IMR-90 (cell line): ENCODE measurements at regions of chr6 and their contacts with region 1.

Region 1: GRCh38 chr6:2448820-2449571 is 203.6 kb upstream of the GMDS start:
- DNase-seq: peak; percentile 89
- ATAC-seq: peak; percentile 95
- H3K4me3 ChIP-seq: peak overlapping the region; percentile 50
- H3K27ac ChIP-seq: no peak overlapping the region
- H3K4me1 ChIP-seq: peaks cover 4% of the 10 kb centered on the region; the same call in 1 of the 2 replicates
- H3K27me3 ChIP-seq: no peaks in the 10 kb centered on the region; the same call in 1 of the 2 replicates
- CTCF ChIP-seq: peak; percentile 89
- POLR2A ChIP-seq: no peak
- RAD21 ChIP-seq: peak; percentile 95

Region 2: GRCh38 chr6:1604158-1605030 is 844.6 kb before region 1 on chr6:
- CTCF ChIA-PET with region 1: interaction called, 3 read pairs
- POLR2A ChIA-PET with region 1: no interaction called
- dilution Hi-C with region 1: no loop called
- in situ Hi-C with region 1: no loop called
- intact Hi-C with region 1: loop called (anchors 2 kb)
- DNase-seq: peak; percentile 36
- ATAC-seq: peak; percentile 93
- H3K4me3 ChIP-seq: peak overlapping the region; percentile 45
- H3K27ac ChIP-seq: no peak overlapping the region
- H3K4me1 ChIP-seq: peaks cover 2% of the 10 kb centered on the region; the same call in 1 of the 2 replicates
- H3K27me3 ChIP-seq: peaks cover 29% of the 10 kb centered on the region
- CTCF ChIP-seq: peak; percentile 95
- POLR2A ChIP-seq: no peak
- RAD21 ChIP-seq: peak; percentile 97

Region 3: DNA sequence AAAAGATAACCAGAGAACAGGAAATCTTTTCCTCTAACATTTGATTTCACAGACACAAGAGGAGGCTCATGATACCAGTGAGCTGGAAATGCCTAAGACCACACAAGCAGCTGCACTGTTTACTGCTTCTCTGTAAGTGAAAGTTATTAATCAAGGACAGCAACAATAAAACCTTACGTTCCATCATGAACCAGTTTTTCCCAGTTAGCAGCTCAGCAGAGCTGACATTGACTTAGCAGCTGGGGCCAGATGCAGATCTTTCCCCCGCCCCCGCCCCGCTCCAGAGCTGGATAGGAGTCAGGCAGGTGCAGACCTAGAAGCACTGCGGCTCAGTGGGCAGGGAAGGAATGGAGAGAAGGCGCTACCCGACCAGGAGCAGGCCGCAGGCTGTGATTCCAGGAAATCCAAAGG is 478.8 kb before region 1 on chr6:
- CTCF ChIA-PET with region 1: no interaction called
- POLR2A ChIA-PET with region 1: no interaction called
- dilution Hi-C with region 1: no loop called
- in situ Hi-C with region 1: no loop called
- intact Hi-C with region 1: loop called (anchors 10 kb)
- DNase-seq: peak; percentile 44
- ATAC-seq: peak; percentile 40; the same call in 1 of the 2 replicates
- H3K4me3 ChIP-seq: no peak overlapping the region
- H3K27ac ChIP-seq: no peak overlapping the region
- H3K4me1 ChIP-seq: peaks cover 5% of the 10 kb centered on the region; the same call in 1 of the 2 replicates
- H3K27me3 ChIP-seq: no peaks in the 10 kb centered on the region
- CTCF ChIP-seq: no peak
- POLR2A ChIP-seq: no peak
- RAD21 ChIP-seq: no peak

Region 4: GRCh38 chr6:2103644-2104523 is 345.1 kb before region 1 on chr6:
- CTCF ChIA-PET with region 1: interaction called, 3 read pairs
- POLR2A ChIA-PET with region 1: no interaction called
- dilution Hi-C with region 1: no loop called
- in situ Hi-C with region 1: no loop called
- intact Hi-C with region 1: loop called (anchors 2 kb)
- DNase-seq: peak; percentile 69
- ATAC-seq: peak; percentile 82
- H3K4me3 ChIP-seq: no peak overlapping the region
- H3K27ac ChIP-seq: no peak overlapping the region
- H3K4me1 ChIP-seq: peaks cover 3% of the 10 kb centered on the region
- H3K27me3 ChIP-seq: no peaks in the 10 kb centered on the region
- CTCF ChIP-seq: peak; percentile 81
- POLR2A ChIP-seq: 0 out of 2 replicates have a peak, but pooled peaks have one; percentile 29
- RAD21 ChIP-seq: peak; percentile 92

Region 5: DNA sequence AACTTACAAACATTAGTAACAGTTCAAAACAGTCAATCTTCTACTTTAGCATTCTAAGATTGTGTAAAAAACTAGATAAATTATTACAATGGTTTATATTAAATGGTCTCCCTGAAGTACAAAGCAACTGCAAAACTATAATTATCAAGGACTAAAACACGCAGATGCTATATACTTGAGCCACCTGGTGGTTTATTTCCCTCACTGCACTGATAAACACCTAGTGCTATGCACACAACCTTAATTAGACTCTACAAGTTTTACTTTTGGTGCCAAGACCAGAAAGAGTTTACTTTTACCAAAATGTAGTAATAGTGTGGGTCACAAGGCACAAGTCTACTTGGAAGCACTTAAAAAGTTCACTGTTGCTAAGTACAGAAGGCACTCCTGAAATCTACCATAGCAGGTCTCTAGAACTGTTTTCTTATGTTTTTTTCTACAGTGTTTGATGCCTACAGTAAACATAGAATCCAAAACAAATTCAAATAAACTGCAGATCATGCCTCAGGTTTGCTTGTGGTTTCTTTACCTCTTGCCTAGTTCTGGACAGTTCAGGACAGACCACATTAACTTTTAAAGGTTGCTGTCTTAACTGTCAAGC is 252.8 kb before region 1 on chr6:
- CTCF ChIA-PET with region 1: interaction called, 3 read pairs
- POLR2A ChIA-PET with region 1: no interaction called
- dilution Hi-C with region 1: no loop called
- in situ Hi-C with region 1: no loop called
- intact Hi-C with region 1: loop called (anchors 2 kb)
- DNase-seq: peak; percentile 61
- ATAC-seq: peak; percentile 84
- H3K4me3 ChIP-seq: no peak overlapping the region
- H3K27ac ChIP-seq: no peak overlapping the region
- H3K4me1 ChIP-seq: peaks cover 8% of the 10 kb centered on the region; the same call in 1 of the 2 replicates
- H3K27me3 ChIP-seq: no peaks in the 10 kb centered on the region
- CTCF ChIP-seq: peak; percentile 72
- POLR2A ChIP-seq: no peak
- RAD21 ChIP-seq: peak; percentile 81

Region 6: GRCh38 chr6:2314641-2315040 is 134.4 kb before region 1 on chr6:
- CTCF ChIA-PET with region 1: no interaction called
- POLR2A ChIA-PET with region 1: no interaction called
- dilution Hi-C with region 1: no loop called
- in situ Hi-C with region 1: no loop called
- intact Hi-C with region 1: no loop called
- DNase-seq: no peak
- ATAC-seq: no peak
- H3K4me3 ChIP-seq: no peak overlapping the region
- H3K27ac ChIP-seq: no peak overlapping the region
- H3K4me1 ChIP-seq: no peaks in the 10 kb centered on the region
- H3K27me3 ChIP-seq: no peaks in the 10 kb centered on the region
- CTCF ChIP-seq: no peak
- POLR2A ChIP-seq: no peak
- RAD21 ChIP-seq: no peak

Region 7: GRCh38 chr6:2634139-2634964 is 185.4 kb after region 1 on chr6:
- CTCF ChIA-PET with region 1: interaction called, 5 read pairs
- POLR2A ChIA-PET with region 1: no interaction called
- dilution Hi-C with region 1: no loop called
- in situ Hi-C with region 1: no loop called
- intact Hi-C with region 1: loop called (anchors 1 kb)
- DNase-seq: peak; percentile 81
- ATAC-seq: peak; percentile 88
- H3K4me3 ChIP-seq: peak overlapping the region; percentile 17; the same call in 1 of the 2 replicates
- H3K27ac ChIP-seq: peak overlapping the region; percentile 24
- H3K4me1 ChIP-seq: peaks cover 19% of the 10 kb centered on the region
- H3K27me3 ChIP-seq: peaks cover under 1% of the 10 kb centered on the region
- CTCF ChIP-seq: peak; percentile 97
- POLR2A ChIP-seq: 0 out of 2 replicates have a peak, but pooled peaks have one; percentile 33
- RAD21 ChIP-seq: peak; percentile 94

Region 8: GRCh38 chr6:2695454-2696095 is 246.6 kb after region 1 on chr6:
- CTCF ChIA-PET with region 1: no interaction called
- POLR2A ChIA-PET with region 1: no interaction called
- dilution Hi-C with region 1: no loop called
- in situ Hi-C with region 1: no loop called
- intact Hi-C with region 1: loop called (anchors 1 kb)
- DNase-seq: peak; percentile 57
- ATAC-seq: peak; percentile 77
- H3K4me3 ChIP-seq: no peak overlapping the region
- H3K27ac ChIP-seq: no peak overlapping the region
- H3K4me1 ChIP-seq: no peaks in the 10 kb centered on the region
- H3K27me3 ChIP-seq: peaks cover 15% of the 10 kb centered on the region
- CTCF ChIP-seq: peak; percentile 63
- POLR2A ChIP-seq: no peak
- RAD21 ChIP-seq: peak; percentile 72